ENCODE measurements at regions of chr14 and their contacts with region 1.

Region 1: GRCh38 chr14:105480952-105481801 is 5.5 kb upstream of the CRIP1 start:
- DNase-seq: peak; percentile 92
- ATAC-seq: peak; percentile 57 to 82 (median 68)
- H3K4me3 ChIP-seq: peak overlapping the region in 9 of 10 donors; percentile 9 to 51 (median 41)
- H3K27ac ChIP-seq: peak overlapping the region; percentile 89 to 100 (median 96)
- H3K4me1 ChIP-seq: peaks cover 62 to 98% (median 89%) of the 10 kb centered on the region in 9 donors
- H3K27me3 ChIP-seq: peaks cover 0 to 40% (median 0%) of the 10 kb centered on the region in 7 donors
- CTCF ChIP-seq: peak; percentile 98 to 100 (median 100)

Region 2: GRCh38 chr14:105197271-105197670 is 283.9 kb before region 1 on chr14:
- intact Hi-C with region 1: loop called in 1 of 10 experiments (anchors 10 kb)
- DNase-seq: peak; percentile 71 to 82
- ATAC-seq: peak; percentile 25 to 61 (median 43)
- H3K4me3 ChIP-seq: peak overlapping the region in 5 of 10 donors; percentile 6 to 38 (median 30)
- H3K27ac ChIP-seq: peak overlapping the region; percentile 80 to 96 (median 88)
- H3K4me1 ChIP-seq: peaks cover 28 to 97% (median 83%) of the 10 kb centered on the region in 9 donors
- H3K27me3 ChIP-seq: peaks cover 8 to 93% (median 46%) of the 10 kb centered on the region in 7 donors
- CTCF ChIP-seq: no peak

Region 3: DNA sequence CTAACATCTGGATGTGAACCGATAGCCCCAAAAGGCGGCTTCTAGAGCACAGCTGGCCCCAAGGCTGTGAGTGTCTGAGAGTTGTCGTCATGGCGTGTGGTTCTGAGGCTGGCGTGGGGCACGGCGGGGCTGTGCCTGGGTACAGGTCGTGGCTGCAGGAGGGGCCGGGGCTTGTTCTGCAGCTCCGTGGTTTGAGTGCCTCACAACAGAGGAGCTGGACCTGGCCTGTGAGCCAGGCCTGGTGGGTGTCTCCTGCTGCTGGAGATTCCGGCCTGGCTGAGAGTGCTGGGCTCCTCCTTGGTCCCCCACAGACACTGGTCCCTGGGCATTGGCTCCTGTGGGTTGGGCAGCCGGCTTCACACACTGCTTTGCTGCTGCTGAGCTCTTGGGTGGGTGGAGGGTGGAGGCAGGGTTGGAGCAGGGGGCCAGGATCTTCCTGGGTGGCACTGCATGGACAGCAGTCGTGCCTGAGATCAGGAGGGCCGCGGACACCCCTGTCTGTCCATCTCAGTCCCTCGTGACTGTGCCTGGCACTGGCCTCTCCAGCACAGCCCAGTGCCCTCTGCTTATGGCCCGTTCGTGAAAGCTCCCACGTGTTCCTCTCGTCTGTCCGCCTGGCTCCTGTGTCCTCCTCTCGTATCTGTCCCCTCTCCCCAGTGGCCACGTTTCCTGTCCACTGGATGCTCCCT is 114.6 kb before region 1 on chr14:
- intact Hi-C with region 1: loop called in 1 of 10 experiments (anchors 2 kb)
- DNase-seq: no peak
- ATAC-seq: no peak
- H3K4me3 ChIP-seq: no peak overlapping the region
- H3K27ac ChIP-seq: no peak overlapping the region
- H3K4me1 ChIP-seq: peaks cover 0 to 12% (median 0%) of the 10 kb centered on the region in 9 donors
- H3K27me3 ChIP-seq: no peaks in the 10 kb centered on the region
- CTCF ChIP-seq: no peak

Region 4: DNA sequence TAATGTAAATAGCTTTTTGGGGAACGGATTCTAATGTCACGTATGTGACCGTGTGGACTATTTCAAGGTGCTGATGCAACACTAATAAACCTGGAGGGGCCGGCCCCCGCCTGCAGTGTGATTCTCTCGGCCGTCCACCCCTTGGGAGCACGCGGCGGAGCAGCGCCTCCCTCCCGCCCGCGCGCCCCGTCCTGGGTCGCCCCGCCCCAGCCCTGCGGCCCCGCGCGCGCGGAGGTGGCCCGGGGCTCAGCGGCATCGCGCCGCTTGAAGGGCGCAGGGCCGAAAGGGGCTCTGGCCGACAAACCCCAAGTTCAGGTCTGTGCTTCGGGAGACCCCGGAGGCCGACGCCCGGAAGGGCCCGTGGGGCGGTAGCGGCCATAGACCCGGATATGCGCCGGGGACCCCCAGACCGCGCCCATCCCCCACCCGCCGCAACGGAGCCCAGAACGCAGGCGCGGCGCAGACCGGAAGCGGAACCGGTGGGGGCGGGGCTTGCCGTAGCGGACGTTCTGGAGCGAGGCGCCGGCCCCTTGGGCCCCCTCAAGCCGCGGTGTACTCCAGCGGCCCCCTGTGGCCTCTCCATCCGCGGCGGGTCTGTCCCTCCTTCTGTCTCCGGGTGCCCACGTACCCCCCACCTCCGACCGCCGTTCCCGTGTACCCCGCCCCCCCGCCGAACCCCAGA is 83.0 kb before region 1 on chr14 and contains the start of gene TEX22:
- intact Hi-C with region 1: loop called in 2 of 10 experiments (anchors 5 to 10 kb)
- DNase-seq: peak; percentile 94 to 96
- ATAC-seq: peak; percentile 90 to 95 (median 92)
- H3K4me3 ChIP-seq: peak within 1 kb of the TSS; percentile 58 to 94 (median 84)
- H3K27ac ChIP-seq: peak within 1 kb of the TSS; percentile 85 to 98 (median 96)
- H3K4me1 ChIP-seq: peaks cover 11 to 51% (median 24%) of the 10 kb centered on the region in 9 donors
- H3K27me3 ChIP-seq: no peaks in the 10 kb centered on the region
- CTCF ChIP-seq: peak in 7 of 9 donors; percentile 22 to 59 (median 33)
- total RNA-seq, gene TEX22: 0.42 to 2.0 (median 1.00) TPM in 8 of 10 donors, not detected in the others

Region 5: DNA sequence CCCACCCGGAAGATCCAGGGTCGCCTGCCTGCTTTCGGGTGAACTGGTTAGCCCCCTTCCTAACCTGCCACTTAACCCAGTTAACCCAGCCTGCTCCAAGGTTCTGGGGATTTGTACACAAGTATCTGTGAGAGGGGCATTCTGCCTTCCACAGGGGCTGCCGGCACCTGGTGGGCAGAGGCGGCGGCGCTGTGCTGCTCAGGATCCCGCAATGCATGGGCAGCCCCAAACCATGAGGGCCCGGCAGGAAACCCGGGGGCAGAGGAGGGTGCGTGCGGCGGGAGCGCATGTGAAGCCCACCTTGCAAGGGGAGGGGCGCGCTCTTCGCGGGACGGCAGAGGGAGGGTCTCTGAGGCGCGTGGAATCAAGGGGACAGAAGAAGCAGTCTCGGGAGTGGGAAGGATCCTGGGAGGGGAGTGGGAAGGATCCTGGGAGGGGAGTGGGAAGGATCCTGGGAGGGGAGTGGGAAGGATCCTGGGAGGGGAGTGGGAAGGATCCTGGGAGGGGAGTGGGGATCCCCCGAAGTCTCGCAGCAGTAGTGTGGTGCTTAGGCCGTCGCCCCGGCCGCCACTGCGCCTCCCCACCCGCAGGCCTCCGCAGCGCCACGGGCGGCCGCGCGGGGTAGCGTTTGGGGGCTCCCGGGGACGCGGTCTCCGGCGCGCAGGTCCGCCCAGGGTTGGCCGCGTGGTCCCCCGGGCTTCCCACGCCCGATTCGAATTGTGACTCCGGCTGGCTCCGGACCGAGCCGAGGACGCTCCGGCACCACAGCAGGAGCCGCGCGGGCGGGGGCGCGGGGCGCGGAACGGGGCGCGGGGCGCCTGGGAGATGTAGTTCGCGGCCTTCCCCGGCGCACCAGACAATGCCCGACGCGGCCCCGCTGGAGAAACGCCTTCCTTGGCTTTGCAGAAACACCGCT is 66.5 kb before region 1 on chr14:
- intact Hi-C with region 1: loop called in 1 of 10 experiments (anchors 10 kb)
- DNase-seq: peak; percentile 78 to 85
- ATAC-seq: peak; percentile 79 to 89 (median 82)
- H3K4me3 ChIP-seq: peak overlapping the region in 9 of 10 donors; percentile 27 to 64 (median 56)
- H3K27ac ChIP-seq: peak overlapping the region; percentile 59 to 87 (median 78)
- H3K4me1 ChIP-seq: peaks cover 9 to 46% (median 39%) of the 10 kb centered on the region in 9 donors
- H3K27me3 ChIP-seq: peaks cover 0 to 53% (median 3%) of the 10 kb centered on the region in 7 donors
- CTCF ChIP-seq: peak; percentile 55 to 88 (median 79)

Region 6: DNA sequence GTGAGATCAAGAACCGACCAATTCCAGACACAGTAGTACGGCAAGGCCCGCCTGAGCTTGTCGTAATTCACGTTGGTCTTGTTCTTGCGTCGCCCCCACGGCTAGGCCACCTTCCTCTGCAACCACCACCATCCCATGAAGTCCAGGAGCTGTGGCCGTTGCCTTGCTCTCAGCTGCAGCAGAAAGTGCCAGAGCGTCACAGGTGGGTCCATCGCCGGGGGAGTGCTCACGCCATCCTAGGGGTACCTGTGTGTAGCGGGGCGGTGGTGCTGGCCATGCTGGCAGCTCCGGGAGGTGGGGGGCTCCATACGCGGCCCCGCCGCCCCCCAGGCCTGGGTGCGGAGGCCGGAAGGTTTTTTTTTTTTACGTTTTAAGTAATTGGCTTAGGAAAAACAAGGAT is 68.3 kb after region 1 on chr14:
- intact Hi-C with region 1: no loop called
- DNase-seq: no peak
- ATAC-seq: no peak
- H3K4me3 ChIP-seq: no peak overlapping the region
- H3K27ac ChIP-seq: no peak overlapping the region
- H3K4me1 ChIP-seq: no peaks in the 10 kb centered on the region
- H3K27me3 ChIP-seq: peaks cover 0 to 13% (median 6%) of the 10 kb centered on the region in 7 donors
- CTCF ChIP-seq: no peak

Region 7: GRCh38 chr14:105841022-105842009 is 360.1 kb after region 1 on chr14:
- intact Hi-C with region 1: no loop called
- DNase-seq: peak in 1 of 2 donors; percentile 1
- ATAC-seq: no peak
- H3K4me3 ChIP-seq: no peak overlapping the region
- H3K27ac ChIP-seq: no peak overlapping the region
- H3K4me1 ChIP-seq: no peaks in the 10 kb centered on the region
- H3K27me3 ChIP-seq: peaks cover 0 to 45% (median 3%) of the 10 kb centered on the region in 7 donors
- CTCF ChIP-seq: no peak

Measured in heart right ventricle (tissue), 16 donors.